ENCODE measurements at regions of chr11 and their contacts with region 1.

Region 1: DNA sequence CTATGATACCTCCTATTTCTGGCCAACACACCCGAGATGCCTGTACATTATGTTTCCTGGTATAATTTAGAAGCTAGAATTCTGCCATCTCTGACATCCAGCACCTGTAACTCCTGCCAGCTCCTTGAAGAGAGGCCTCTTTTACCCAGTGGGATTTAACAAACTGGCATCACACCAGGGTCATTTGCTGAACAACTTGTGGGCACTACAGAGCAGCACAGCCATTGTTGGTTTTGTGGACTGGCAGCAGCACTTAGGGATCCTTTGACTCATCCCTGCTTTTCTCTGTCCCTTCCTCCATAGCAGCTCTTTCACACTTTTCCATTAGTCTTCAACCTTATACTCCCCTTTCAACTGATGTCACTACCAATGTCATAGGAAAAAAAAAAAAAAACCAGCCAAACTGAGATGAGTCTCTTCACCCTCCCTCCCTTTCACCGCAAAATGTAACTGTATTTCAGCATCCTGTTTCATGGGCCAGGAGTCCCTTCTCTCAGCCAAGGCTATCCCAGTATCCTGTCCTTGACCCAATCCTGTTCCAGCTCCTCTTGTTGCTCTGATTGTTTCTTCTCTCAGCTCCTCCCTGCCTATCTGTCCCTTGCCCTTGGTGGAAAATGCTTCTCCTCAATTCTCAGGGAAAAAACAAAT is 68.7 kb downstream of the PPFIBP2 start:
- DNase-seq: no peak
- H3K4me3 ChIP-seq: no peak overlapping the region
- H3K27me3 ChIP-seq: no peaks in the 10 kb centered on the region
- CTCF ChIP-seq: no peak

Region 2: DNA sequence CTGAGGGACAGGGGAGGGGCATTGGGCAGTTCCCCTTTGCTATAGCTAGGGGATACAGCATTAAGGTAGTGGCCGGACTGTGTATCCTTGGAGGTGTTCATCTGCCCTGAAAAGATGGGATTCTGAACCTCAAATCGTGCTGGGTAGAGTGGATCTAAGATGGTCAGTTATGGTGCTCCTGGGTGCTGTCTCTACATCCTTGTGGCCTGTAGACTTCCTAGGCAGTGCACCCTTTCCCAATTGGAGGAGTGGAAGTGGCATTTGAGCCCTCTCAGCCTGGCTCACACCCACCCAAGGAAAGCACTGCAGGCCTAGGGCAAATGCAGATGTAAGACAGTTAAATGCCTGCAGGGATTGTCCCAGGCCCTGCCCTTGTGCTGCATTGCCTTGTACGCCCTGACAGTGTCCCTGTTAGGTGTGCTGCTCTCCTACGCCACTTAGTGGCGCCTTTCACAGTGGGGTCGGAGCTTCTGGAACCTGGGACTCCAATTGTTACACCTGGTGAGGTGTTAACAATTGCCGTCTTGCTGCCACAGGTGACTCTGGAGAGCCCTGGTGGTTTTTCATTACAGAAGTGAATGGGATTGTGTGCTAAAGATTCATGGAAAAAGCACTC is 33.7 kb before region 1 on chr11:
- CTCF ChIA-PET with region 1: interaction called, 3 read pairs
- POLR2A ChIA-PET with region 1: interaction called, 10 read pairs
- DNase-seq: no peak
- H3K4me3 ChIP-seq: no peak overlapping the region
- H3K27me3 ChIP-seq: no peaks in the 10 kb centered on the region
- CTCF ChIP-seq: no peak

Region 3: GRCh38 chr11:7643314-7643713 is 60.9 kb after region 1 on chr11:
- CTCF ChIA-PET with region 1: no interaction called
- POLR2A ChIA-PET with region 1: no interaction called
- DNase-seq: no peak
- H3K4me3 ChIP-seq: no peak overlapping the region
- H3K27me3 ChIP-seq: no peaks in the 10 kb centered on the region
- CTCF ChIP-seq: no peak